Tibial artery (tissue), 4 donors: ENCODE measurements at regions of chr14 and their contacts with region 1.

Region 1: GRCh38 chr14:96275177-96276112 is 19.4 kb downstream of the BDKRB1 start:
- DNase-seq: peak; percentile 68 to 79
- H3K4me3 ChIP-seq: no peak overlapping the region
- H3K27ac ChIP-seq: no peak overlapping the region
- H3K4me1 ChIP-seq: peaks cover 0 to 9% (median 2%) of the 10 kb centered on the region in 4 donors
- H3K27me3 ChIP-seq: no peaks in the 10 kb centered on the region
- CTCF ChIP-seq: peak; percentile 74 to 81

Region 2: DNA sequence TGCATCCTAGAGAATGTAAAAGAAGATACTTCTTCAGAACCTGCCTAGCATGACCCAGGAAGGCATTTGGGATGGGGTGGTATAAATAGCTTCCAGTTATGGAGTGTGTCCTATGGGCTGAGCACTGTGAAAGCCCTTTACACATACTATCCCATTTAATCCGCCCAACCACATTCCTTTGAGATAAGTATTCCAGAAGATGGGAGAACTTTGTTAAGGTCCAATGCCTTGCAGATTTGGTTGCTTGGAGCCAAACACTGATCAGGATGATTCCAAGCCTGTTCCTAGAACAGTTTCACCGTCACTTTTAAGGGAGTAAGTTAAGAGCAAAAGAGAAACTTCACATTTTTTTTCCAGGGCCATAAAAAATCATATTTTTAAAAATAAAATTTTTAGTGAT is 873.3 kb before region 1 on chr14:
- intact Hi-C with region 1: no loop called
- DNase-seq: no peak
- H3K4me3 ChIP-seq: no peak overlapping the region
- H3K27ac ChIP-seq: no peak overlapping the region
- H3K4me1 ChIP-seq: no peaks in the 10 kb centered on the region
- H3K27me3 ChIP-seq: no peaks in the 10 kb centered on the region
- CTCF ChIP-seq: no peak

Region 3: GRCh38 chr14:96100161-96101029 is 175.1 kb before region 1 on chr14:
- intact Hi-C with region 1: loop called (anchors 10 kb)
- DNase-seq: peak; percentile 70 to 81
- H3K4me3 ChIP-seq: no peak overlapping the region
- H3K27ac ChIP-seq: no peak overlapping the region
- H3K4me1 ChIP-seq: peaks cover 0 to 7% (median 2%) of the 10 kb centered on the region in 4 donors
- H3K27me3 ChIP-seq: peaks cover 0 to 17% of the 10 kb centered on the region in 2 donors
- CTCF ChIP-seq: peak; percentile 55 to 61